B cell (primary cell): ENCODE measurements at regions of chr19 and their contacts with region 1.

Region 1: GRCh38 chr19:51593969-51594773 is 23.1 kb downstream of the ZNF175 start:
- DNase-seq: peak; percentile 97
- ATAC-seq: peak; percentile 100
- H3K4me3 ChIP-seq: peak overlapping the region; percentile 53 to 92 (median 88)
- H3K4me3 Mint-ChIP-seq: peak overlapping the region; percentile 92
- H3K27ac ChIP-seq: peak overlapping the region; percentile 19 to 55
- H3K27ac Mint-ChIP-seq: peak overlapping the region; percentile 84
- H3K4me1 ChIP-seq: peaks cover 16 to 21% of the 10 kb centered on the region in 2 donors
- H3K4me1 Mint-ChIP-seq: peaks cover 25% of the 10 kb centered on the region
- H3K27me3 ChIP-seq: no peaks in the 10 kb centered on the region
- H3K27me3 Mint-ChIP-seq: no peaks in the 10 kb centered on the region
- CTCF ChIP-seq: no peak

Region 2: DNA sequence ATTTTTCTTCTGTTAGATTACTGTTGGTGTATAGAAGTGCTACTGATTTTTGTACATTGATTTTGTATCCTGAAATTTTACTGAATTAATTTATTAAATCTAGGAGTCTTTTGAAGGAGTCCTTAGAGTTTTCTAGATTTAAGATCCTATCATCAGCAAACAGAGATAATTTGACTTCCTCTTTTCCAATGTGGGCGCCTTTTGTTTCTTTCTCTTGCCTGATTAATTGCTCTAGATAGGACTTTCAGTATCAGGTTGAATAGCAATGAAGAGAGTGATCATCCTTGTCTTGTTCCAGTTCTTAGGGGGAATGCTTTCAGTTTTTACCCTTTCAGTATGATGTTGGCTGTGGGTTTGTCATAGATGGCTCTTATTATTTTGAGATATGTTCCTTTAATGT is 374.9 kb before region 1 on chr19:
- CTCF ChIA-PET with region 1: no interaction called
- POLR2A ChIA-PET with region 1: no interaction called
- intact Hi-C with region 1: no loop called
- DNase-seq: no peak
- ATAC-seq: no peak
- H3K4me3 ChIP-seq: no peak overlapping the region
- H3K4me3 Mint-ChIP-seq: no peak overlapping the region
- H3K27ac ChIP-seq: no peak overlapping the region
- H3K27ac Mint-ChIP-seq: no peak overlapping the region
- H3K4me1 ChIP-seq: no peaks in the 10 kb centered on the region
- H3K4me1 Mint-ChIP-seq: peaks cover 5% of the 10 kb centered on the region
- H3K27me3 ChIP-seq: peaks cover 0 to 7% (median 1%) of the 10 kb centered on the region in 4 experiments
- H3K27me3 Mint-ChIP-seq: peaks cover 30% of the 10 kb centered on the region
- CTCF ChIP-seq: no peak

Region 3: DNA sequence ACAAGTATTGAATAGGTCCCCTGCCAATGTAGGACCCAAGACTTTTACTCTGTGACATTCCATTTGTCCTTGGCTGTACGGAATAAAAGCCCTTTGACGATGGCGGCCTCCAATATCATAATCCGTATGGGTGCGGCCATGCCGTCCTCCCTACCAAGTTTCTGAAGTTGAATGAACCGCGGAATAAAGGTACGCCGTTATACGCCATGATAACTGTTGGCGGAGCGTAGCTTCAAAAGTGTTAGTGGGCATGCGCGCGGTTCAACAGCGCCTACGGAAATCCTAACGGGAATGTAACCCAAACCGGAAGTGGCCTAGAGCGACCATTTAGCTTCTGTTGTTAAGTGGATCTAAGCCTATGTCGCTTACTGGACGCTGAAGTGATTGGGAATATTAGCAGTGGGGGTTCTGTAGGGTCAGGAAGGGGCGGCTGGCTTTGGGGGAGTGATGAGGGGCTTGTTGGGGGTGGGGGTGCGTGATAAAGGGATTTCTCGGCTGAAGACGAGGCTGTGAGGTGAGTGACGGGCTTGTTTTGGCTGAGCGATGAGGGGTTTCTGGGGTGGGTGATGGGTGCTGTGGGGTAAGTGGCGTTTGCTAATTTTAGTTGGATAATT is 23.1 kb before region 1 on chr19 and contains the start of gene ZNF175:
- CTCF ChIA-PET with region 1: no interaction called
- POLR2A ChIA-PET with region 1: no interaction called
- intact Hi-C with region 1: loop called (anchors 1 kb)
- DNase-seq: peak; percentile 91
- ATAC-seq: peak; percentile 96
- H3K4me3 ChIP-seq: peak within 1 kb of the TSS; percentile 59 to 84 (median 81)
- H3K4me3 Mint-ChIP-seq: peak within 1 kb of the TSS; percentile 88
- H3K27ac ChIP-seq: peak within 1 kb of the TSS in 1 of 2 donors; percentile 59
- H3K27ac Mint-ChIP-seq: peak within 1 kb of the TSS; percentile 83
- H3K4me1 ChIP-seq: peaks cover 19% of the 10 kb centered on the region in 2 donors
- H3K4me1 Mint-ChIP-seq: peaks cover 38% of the 10 kb centered on the region
- H3K27me3 ChIP-seq: no peaks in the 10 kb centered on the region
- H3K27me3 Mint-ChIP-seq: no peaks in the 10 kb centered on the region
- CTCF ChIP-seq: no peak
- total RNA-seq, gene ZNF175: 31.3 and 33.0 TPM in 2 replicates